Aorta (tissue), 5 donors: ENCODE measurements at regions of chrX and their contacts with region 1.

Region 1: GRCh38 chrX:43654431-43655150 is 1.5 kb upstream of the MAOA start:
- DNase-seq: peak; percentile 95 to 96
- ATAC-seq: peak; percentile 96
- H3K4me3 ChIP-seq: peak overlapping the region; percentile 8 to 73
- H3K27ac ChIP-seq: peak overlapping the region in 1 of 2 donors; percentile 84
- H3K4me1 ChIP-seq: no peaks in the 10 kb centered on the region
- H3K27me3 ChIP-seq: no peaks in the 10 kb centered on the region

Region 2: GRCh38 chrX:43703211-43703791 is 48.7 kb after region 1 on chrX:
- intact Hi-C with region 1: loop called in 1 of 2 experiments (anchors 5 kb)
- DNase-seq: no peak
- ATAC-seq: peak; percentile 54
- H3K4me3 ChIP-seq: no peak overlapping the region
- H3K27ac ChIP-seq: peak overlapping the region; percentile 57 to 82
- H3K4me1 ChIP-seq: peaks cover 3 to 10% of the 10 kb centered on the region in 2 donors
- H3K27me3 ChIP-seq: no peaks in the 10 kb centered on the region

Region 3: DNA sequence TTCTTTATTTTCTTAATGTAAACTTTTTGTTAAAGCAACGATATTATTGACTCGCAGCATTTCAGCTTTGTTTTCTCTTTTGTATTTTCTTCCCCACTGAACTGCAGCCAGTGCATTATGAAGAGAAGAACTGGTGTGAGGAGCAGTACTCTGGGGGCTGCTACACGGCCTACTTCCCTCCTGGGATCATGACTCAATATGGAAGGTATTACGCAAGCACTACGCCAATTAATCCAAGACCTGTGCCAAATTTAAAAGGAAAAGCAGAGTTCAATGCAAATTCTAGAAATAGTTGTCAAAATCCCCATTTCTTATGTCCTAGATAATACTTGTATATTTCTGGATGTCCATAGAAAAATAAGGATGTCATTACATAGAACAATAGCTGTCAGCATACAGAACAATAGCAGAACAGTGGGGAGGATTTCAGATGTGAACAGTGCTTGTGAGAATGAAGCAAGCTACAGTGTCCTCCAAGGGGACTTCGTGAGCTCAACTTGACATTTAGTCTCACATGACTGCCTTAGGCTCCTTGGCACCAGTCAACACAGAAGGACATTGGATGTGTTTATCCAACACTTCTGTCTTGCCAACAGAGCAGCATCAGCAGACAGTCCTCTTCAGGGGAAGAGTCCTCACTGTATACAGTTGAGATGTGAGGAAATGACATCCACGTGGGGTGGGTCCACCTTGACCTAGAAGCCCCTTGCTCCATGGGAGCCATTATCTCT is 87.4 kb after region 1 on chrX:
- intact Hi-C with region 1: loop called in 1 of 2 experiments (anchors 5 kb)
- DNase-seq: no peak
- ATAC-seq: peak; percentile 78
- H3K4me3 ChIP-seq: no peak overlapping the region
- H3K27ac ChIP-seq: no peak overlapping the region
- H3K4me1 ChIP-seq: no peaks in the 10 kb centered on the region
- H3K27me3 ChIP-seq: no peaks in the 10 kb centered on the region